ENCODE measurements at regions of chr12 and their contacts with region 1.

Region 1: GRCh38 chr12:8078398-8078797 is 3.7 kb upstream of the NECAP1 start:
- DNase-seq: peak in 1 of 2 donors; percentile 87
- ATAC-seq: no peak
- H3K4me3 ChIP-seq: no peak overlapping the region
- H3K4me3 Mint-ChIP-seq: no peak overlapping the region
- H3K27ac ChIP-seq: no peak overlapping the region
- H3K27ac Mint-ChIP-seq: no peak overlapping the region
- H3K4me1 ChIP-seq: peaks cover 7% of the 10 kb centered on the region
- H3K4me1 Mint-ChIP-seq: peaks cover 17 to 20% of the 10 kb centered on the region in 2 donors
- H3K27me3 ChIP-seq: no peaks in the 10 kb centered on the region
- H3K27me3 Mint-ChIP-seq: peaks cover 0 to 2% of the 10 kb centered on the region in 2 donors
- CTCF ChIP-seq: peak; percentile 19

Region 2: DNA sequence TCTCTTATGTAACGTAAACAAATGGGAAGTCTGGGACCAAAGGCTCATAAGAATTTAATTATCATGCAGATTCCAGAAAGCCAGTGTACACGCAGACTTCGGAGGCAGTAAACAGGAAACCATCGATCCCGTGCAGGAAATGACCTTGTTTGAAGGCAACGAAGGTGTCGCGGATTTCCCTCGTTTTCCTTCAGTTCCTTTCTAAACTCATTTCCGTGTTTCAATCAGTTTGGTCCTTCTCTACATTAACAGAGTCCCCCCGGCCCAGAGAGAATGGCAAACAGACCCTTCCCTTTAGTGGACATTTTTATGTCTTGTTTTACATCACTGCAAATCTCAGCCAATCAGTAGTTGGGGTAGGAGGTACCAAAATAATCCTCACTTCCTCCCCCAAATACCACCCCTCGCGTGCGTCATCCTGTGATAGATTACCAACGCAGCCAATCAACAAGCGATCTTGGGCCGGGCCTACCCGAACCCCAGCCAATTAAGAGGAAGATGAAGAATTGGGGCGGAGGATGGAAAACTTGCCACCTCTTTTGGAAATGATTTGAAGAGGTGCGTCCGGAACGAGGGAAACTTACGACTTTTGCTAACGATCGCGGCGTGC is 52.0 kb before region 1 on chr12:
- intact Hi-C with region 1: loop called (anchors 1 kb)
- DNase-seq: peak; percentile 94 to 98
- ATAC-seq: peak; percentile 93 to 99 (median 93)
- H3K4me3 ChIP-seq: peak overlapping the region; percentile 88
- H3K4me3 Mint-ChIP-seq: peak overlapping the region; percentile 99
- H3K27ac ChIP-seq: peak overlapping the region; percentile 99
- H3K27ac Mint-ChIP-seq: peak overlapping the region; percentile 100
- H3K4me1 ChIP-seq: peaks cover 13% of the 10 kb centered on the region
- H3K4me1 Mint-ChIP-seq: peaks cover 17 to 18% of the 10 kb centered on the region in 2 donors
- H3K27me3 ChIP-seq: no peaks in the 10 kb centered on the region
- H3K27me3 Mint-ChIP-seq: no peaks in the 10 kb centered on the region
- CTCF ChIP-seq: no peak

Region 3: DNA sequence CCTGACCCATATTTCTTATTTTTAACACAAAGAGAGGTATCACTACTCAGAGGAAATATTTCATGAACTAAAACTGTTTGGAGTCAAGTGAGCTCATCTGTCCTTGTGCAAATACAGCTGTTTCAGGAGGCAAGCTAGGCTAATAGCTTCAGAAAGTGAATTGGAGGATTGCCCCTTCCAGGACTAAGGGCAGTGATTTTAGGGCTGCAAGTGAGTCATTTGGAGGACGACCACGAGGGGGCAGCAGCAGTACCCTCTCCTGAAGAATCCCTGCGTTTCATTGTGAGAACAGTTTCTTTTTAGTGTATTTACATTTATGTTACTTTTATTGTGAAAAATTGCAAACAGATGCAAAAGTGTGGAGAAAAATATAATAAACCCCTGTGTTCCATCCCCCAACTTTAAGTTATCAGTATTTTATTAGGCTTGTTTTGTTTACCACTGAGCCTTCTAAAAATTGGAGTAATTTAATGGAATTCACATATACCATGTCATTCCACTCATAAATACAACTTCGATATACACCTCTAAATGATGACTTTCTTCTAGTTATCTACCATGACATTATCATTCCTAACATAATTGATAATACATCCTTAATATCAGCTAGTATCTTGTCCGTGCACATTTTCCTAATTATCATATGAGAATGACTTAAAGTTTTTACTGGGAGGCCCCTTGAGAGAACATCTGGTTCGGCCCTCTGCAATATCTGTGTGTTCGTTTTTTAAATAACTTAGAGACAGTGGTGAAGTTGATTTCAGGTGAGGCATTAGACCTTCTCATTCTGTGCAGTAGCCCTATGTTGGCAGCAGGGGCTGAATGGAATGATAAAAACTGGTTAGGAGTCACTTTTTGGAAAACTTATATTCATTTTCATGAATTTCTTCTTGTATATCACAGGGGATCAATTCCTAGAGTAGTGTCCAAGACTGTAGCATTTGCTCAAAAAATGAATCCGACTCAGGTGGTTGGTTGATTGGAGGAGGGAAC is 32.1 kb before region 1 on chr12:
- intact Hi-C with region 1: loop called (anchors 1 kb)
- DNase-seq: peak; percentile 73 to 90
- ATAC-seq: peak; percentile 87 to 94 (median 90)
- H3K4me3 ChIP-seq: no peak overlapping the region
- H3K4me3 Mint-ChIP-seq: no peak overlapping the region
- H3K27ac ChIP-seq: no peak overlapping the region
- H3K27ac Mint-ChIP-seq: no peak overlapping the region
- H3K4me1 ChIP-seq: no peaks in the 10 kb centered on the region
- H3K4me1 Mint-ChIP-seq: peaks cover 0 to 5% of the 10 kb centered on the region in 2 donors
- H3K27me3 ChIP-seq: no peaks in the 10 kb centered on the region
- H3K27me3 Mint-ChIP-seq: no peaks in the 10 kb centered on the region
- CTCF ChIP-seq: peak; percentile 87

Region 4: DNA sequence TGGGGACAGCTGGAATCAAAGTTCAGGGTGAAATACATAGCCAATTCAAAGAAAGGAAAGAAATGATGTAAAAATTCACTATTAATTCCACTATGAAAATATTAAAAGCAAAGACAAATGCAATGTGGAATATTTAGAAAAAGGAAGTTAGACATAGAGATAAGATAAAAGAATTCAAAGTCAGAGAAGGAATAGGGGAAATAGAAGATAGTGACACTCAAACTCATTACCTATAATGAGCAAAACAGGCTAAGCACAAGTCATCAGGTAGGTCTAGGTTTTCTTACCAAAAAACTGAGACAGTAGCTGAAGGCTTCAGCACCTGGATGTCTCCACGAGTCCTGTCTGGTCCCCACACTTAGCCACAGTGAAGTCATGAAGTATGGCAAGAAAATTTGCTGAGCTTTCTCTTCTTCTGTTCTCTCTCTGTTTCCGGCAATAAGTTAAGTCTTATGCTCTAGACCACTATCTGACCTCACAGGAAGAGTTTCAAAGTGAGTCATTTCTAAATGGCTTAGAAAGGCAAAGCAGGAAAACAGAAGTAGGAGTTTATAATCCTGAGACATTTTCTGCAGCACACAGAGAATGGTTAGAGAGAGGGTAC is 12.3 kb before region 1 on chr12 and contains the start of gene C3AR1:
- intact Hi-C with region 1: loop called (anchors 1 kb)
- DNase-seq: peak in 1 of 2 donors; percentile 82
- ATAC-seq: peak; percentile 96 to 99 (median 97)
- H3K4me3 ChIP-seq: peak within 1 kb of the TSS; percentile 25
- H3K4me3 Mint-ChIP-seq: peak within 1 kb of the TSS; percentile 91
- H3K27ac ChIP-seq: peak within 1 kb of the TSS; percentile 73
- H3K27ac Mint-ChIP-seq: peak within 1 kb of the TSS; percentile 89 to 98
- H3K4me1 ChIP-seq: peaks cover 13% of the 10 kb centered on the region
- H3K4me1 Mint-ChIP-seq: peaks cover 28 to 29% of the 10 kb centered on the region in 2 donors
- H3K27me3 ChIP-seq: no peaks in the 10 kb centered on the region
- H3K27me3 Mint-ChIP-seq: no peaks in the 10 kb centered on the region
- CTCF ChIP-seq: no peak
- total RNA-seq, gene C3AR1: 9.5 to 16.9 (median 13.0) TPM

Measured in natural killer cell (primary cell).